ENCODE measurements at regions of chr6 and their contacts with region 1.

Region 1: DNA sequence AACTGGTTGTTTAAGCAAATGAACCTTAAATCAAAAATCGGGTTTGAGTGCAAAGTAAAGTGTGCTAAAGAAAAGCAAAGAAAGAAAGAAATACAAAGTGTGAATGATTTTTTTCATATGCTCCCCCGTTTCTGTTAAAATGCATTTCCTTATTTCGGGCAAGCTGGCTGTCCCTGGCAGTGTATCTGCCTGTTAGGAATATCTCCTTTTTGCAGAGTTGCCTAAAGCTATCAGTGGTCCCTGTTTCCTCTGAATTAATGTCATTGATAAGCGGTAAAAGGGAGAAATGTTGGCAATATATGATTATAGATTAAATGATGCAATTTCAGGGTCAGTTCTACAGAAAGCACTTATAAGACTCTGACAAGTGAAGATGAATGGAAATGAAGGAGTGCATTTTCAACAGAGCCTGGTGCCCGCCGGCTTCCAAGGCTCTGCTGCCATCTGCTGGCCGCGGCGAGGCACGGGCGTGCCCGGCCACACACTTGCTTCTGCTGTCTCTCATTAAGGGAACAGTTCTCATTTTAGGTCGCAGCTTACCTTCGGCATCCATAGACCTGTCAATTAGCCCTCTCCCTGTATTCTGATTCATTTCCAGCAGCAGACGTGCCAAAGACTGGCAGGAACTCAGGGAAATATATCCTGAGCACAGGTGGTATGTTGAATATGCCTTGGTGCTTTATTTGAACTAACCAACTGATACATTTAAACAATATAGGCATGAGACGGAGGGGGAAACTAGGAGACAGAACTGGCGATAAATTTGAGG is 381.9 kb downstream of the C6orf118 start:
- DNase-seq: peak; percentile 36
- ATAC-seq: peak; percentile 95
- H3K4me3 ChIP-seq: no peak overlapping the region
- H3K27ac ChIP-seq: no peak overlapping the region
- H3K4me1 ChIP-seq: no peaks in the 10 kb centered on the region
- H3K27me3 ChIP-seq: no peaks in the 10 kb centered on the region
- CTCF ChIP-seq: peak; percentile 98

Region 2: DNA sequence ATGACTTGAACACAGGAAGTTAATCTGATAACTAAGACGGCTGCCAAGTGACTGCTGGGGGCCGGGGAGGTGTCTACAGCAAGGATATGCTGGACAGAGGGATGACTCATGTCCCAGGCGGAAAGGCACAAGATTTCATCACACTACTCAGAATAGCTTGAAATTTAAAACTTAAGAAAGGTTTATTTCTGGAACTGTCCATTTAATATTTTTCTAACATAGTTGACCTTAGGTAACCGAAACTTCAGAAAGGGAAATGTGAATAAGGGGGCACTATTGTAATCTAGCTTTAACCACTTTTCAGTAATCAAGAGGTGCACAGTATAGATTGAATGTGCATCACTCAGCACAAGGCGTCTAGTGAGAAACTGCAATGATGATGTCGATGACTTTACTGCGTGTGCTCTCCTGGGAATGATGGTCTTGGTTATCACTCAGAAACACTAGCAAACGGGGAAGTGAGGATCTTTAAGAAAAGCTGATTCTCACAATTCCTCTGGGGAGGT is 1341.5 kb before region 1 on chr6:
- CTCF ChIA-PET with region 1: no interaction called
- POLR2A ChIA-PET with region 1: no interaction called
- in situ Hi-C with region 1: no loop called
- intact Hi-C with region 1: loop called (anchors 10 kb)
- DNase-seq: no peak
- ATAC-seq: no peak
- H3K4me3 ChIP-seq: no peak overlapping the region
- H3K27ac ChIP-seq: no peak overlapping the region
- H3K4me1 ChIP-seq: no peaks in the 10 kb centered on the region
- H3K27me3 ChIP-seq: no peaks in the 10 kb centered on the region
- CTCF ChIP-seq: no peak